Vagina (tissue), 2 donors: ENCODE measurements at regions of chr1 and their contacts with region 1.

Region 1: DNA sequence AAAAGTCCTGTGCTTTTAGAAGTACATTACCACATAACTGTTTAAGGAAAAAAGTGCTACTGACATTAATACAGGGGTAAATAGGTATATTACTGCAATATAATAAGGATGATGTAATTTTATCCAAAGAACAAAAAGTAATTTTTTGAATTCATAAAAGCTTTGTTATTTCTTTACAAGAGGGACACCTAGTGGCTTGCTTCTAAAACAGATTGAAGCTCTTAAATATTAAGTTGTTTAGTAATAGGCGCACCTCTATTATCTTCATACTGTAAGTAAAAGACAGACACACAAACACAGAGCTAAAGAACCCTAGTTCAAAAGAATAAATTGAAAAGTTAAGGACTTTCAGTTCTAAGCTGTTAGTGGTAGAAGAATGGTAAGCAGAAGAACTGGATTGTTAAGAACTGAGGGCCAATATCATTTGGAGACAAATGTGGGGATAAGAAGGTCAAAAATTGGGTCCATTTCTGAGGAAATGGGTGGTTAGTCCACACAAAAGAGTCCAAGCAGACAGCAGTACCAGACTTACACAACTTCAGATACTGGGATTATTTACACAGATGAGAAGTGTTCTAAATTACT is 15.4 kb downstream of the ZNHIT6 start:
- DNase-seq: no peak
- H3K4me3 ChIP-seq: no peak overlapping the region
- H3K27ac ChIP-seq: no peak overlapping the region
- H3K4me1 ChIP-seq: peaks cover 7% of the 10 kb centered on the region
- H3K27me3 ChIP-seq: no peaks in the 10 kb centered on the region
- CTCF ChIP-seq: peak in 1 of 3 experiments; percentile 28
- POLR2A ChIP-seq: no peak

Region 2: DNA sequence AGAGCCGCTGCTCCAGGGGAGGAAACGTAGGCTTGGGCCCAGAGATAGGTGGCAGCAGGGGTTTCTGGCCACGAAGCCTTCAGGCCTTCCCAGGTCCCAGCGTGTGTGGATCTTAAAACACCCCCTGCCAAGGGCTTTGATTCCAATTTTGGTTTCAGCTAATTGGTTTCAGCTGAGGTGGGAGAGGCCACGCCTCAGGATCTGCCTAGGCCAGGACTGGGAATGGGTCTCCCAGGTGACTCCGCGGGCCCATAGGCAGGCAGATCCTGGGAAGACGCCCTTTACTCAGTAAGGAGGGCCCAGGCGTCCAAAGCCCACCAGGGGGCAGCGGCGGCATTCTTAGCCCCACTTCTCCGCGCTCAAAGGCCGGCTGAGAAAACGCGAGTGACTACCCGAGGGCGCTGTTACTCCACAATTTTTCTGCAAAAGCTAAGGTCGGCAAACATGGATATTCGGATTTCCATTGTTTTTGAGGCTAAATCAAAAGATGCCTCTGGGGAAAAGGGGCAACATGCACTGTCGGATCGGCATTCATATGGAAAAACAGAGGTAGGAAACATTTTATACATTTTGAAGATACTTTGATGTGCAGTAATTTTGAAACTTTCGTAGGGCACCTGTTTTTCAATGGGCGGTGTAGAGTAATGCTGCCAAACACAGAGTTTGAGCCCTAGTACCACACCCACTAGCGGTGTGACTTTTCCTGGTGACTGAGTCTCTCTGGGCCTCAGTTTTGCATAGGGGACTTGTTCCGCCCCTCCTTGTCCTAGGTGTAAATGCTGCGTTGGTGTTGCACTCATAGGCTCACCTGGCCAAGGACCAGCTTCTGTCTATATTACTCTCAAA is 384.6 kb before region 1 on chr1:
- intact Hi-C with region 1: loop called (anchors 2 kb)
- DNase-seq: no peak
- H3K4me3 ChIP-seq: no peak overlapping the region
- H3K27ac ChIP-seq: no peak overlapping the region
- H3K4me1 ChIP-seq: no peaks in the 10 kb centered on the region
- H3K27me3 ChIP-seq: no peaks in the 10 kb centered on the region
- CTCF ChIP-seq: peak; percentile 80 to 97 (median 97)
- POLR2A ChIP-seq: no peak